ENCODE measurements at regions of chr1 and their contacts with region 1.

Region 1: GRCh38 chr1:56831871-56832693 is 12.9 kb upstream of the FYB2 start:
- DNase-seq: peak; percentile 47 to 77 (median 69)
- H3K4me3 ChIP-seq: no peak overlapping the region
- H3K27ac ChIP-seq: no peak overlapping the region
- H3K4me1 ChIP-seq: no peaks in the 10 kb centered on the region
- H3K27me3 ChIP-seq: no peaks in the 10 kb centered on the region
- CTCF ChIP-seq: peak; percentile 60 to 75 (median 67)
- EP300 ChIP-seq: no peak
- POLR2A ChIP-seq: no peak

Region 2: DNA sequence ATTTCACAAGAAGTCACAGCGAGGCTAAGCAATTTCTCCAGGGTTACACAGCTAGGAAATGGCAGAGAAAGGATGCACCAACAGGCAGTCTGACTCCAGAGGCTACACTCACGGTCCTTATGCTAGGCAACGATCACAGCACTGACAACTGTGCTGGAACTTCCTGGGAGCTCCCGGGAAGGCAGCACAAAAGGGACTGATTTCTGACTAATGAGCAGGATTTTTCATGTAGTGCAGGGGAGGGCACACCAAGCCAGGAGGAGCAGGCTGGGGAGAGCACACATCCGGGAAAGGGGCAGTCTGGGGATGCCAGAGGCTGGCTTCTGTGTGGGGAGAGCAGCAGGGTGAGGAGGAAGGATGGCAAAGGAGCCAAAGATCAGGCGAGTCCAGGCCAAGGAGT is 1227.7 kb after region 1 on chr1:
- intact Hi-C with region 1: loop called in 1 of 4 experiments (anchors 10 kb)
- DNase-seq: no peak
- H3K4me3 ChIP-seq: no peak overlapping the region
- H3K27ac ChIP-seq: no peak overlapping the region
- H3K4me1 ChIP-seq: no peaks in the 10 kb centered on the region
- H3K27me3 ChIP-seq: no peaks in the 10 kb centered on the region
- CTCF ChIP-seq: no peak
- EP300 ChIP-seq: no peak
- POLR2A ChIP-seq: no peak

Region 3: GRCh38 chr1:58162952-58163550 is 1331.0 kb after region 1 on chr1:
- intact Hi-C with region 1: loop called in 1 of 4 experiments (anchors 5 kb)
- DNase-seq: peak; percentile 21 to 49 (median 30)
- H3K4me3 ChIP-seq: no peak overlapping the region
- H3K27ac ChIP-seq: no peak overlapping the region
- H3K4me1 ChIP-seq: peaks cover 4% of the 10 kb centered on the region
- H3K27me3 ChIP-seq: no peaks in the 10 kb centered on the region
- CTCF ChIP-seq: peak in 2 of 3 donors; percentile 17 to 42
- EP300 ChIP-seq: no peak
- POLR2A ChIP-seq: no peak